ENCODE measurements at regions of chr4 and their contacts with region 1.

Region 1: DNA sequence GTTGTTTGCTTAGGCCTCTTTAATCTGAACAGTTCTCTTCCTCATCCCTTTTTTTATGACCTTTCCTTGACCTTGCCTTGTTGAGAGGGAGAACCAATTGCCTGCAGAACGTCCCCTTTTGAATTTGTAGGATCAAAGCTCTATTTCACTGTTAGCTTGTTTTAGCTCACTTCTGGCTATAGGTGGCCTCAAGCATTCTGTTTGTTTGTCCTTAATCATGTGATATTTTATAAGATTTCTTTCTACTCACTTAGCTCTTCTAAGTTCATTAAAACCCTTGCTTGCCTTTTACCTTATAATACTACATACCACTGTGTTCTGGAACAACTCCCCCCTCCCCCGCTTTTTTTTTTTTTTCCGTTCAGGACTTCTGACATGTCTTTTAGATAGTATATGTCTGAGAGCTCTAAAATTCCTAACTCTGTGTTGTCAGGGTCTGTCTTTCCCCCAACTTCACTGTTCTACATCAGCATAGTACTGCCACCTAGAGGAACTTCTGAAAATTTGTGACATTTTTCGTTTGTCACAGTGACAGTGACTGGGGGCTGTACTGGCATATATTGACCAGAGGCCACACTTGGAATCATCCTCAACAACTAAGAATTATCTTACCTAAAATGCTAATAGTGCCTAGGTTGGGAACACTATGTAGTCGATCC is 128.5 kb downstream of the LARP7 start:
- DNase-seq: peak; percentile 7
- ATAC-seq: peak; percentile 91
- H3K4me3 ChIP-seq: no peak overlapping the region
- H3K27ac ChIP-seq: no peak overlapping the region
- H3K4me1 ChIP-seq: no peaks in the 10 kb centered on the region; the same call in 1 of the 2 replicates
- H3K27me3 ChIP-seq: no peaks in the 10 kb centered on the region
- CTCF ChIP-seq: peak; percentile 49 to 58 (median 56); a peak in 5 of 6 replicates
- EP300 ChIP-seq: no peak
- POLR2A ChIP-seq: no peak
- RAD21 ChIP-seq: peak; percentile 67

Region 2: GRCh38 chr4:112327965-112328733 is 437.3 kb before region 1 on chr4:
- CTCF ChIA-PET with region 1: interaction called, 22 read pairs
- POLR2A ChIA-PET with region 1: no interaction called
- RAD21 ChIA-PET with region 1: interaction called, 3 read pairs
- SMC1A ChIA-PET with region 1: interaction called, 9 read pairs
- in situ Hi-C with region 1: loop called (anchors 5 kb)
- intact Hi-C with region 1: loop called (anchors 2 kb)
- DNase-seq: peak; percentile 73
- ATAC-seq: peak; percentile 92
- H3K4me3 ChIP-seq: no peak overlapping the region
- H3K27ac ChIP-seq: no peak overlapping the region
- H3K4me1 ChIP-seq: peaks cover 4% of the 10 kb centered on the region
- H3K27me3 ChIP-seq: no peaks in the 10 kb centered on the region
- CTCF ChIP-seq: peak; percentile 51 to 78 (median 52); a peak in 5 of 6 replicates
- EP300 ChIP-seq: 0 out of 4 replicates have a peak, but pooled peaks of 1 of the 2 experiments have one; percentile 17
- POLR2A ChIP-seq: no peak
- RAD21 ChIP-seq: peak; percentile 90

Region 3: DNA sequence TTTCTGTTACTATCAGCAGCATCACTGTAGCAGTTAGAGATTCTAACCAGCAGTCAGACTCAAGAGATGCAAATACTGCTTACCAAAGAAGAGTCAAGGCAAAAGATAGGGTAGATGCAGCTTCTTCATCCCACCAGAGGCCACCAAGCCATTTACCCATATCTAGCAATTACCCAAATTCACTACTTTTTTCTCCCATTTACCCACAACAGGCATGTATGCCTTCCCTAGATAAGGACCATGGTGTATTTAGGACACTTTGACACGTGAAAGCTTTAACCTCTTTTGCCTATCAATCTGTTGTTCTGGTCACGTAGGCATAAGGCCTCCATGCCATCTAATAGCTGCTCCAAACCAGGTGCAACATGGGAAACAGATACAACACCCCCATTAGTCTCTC is 122.9 kb before region 1 on chr4:
- CTCF ChIA-PET with region 1: interaction called, 205 read pairs
- POLR2A ChIA-PET with region 1: no interaction called
- RAD21 ChIA-PET with region 1: interaction called, 8 read pairs
- SMC1A ChIA-PET with region 1: interaction called, 46 read pairs
- in situ Hi-C with region 1: loop called (anchors 5 kb)
- intact Hi-C with region 1: loop called (anchors 1 kb)
- DNase-seq: no peak
- ATAC-seq: peak; percentile 17
- H3K4me3 ChIP-seq: no peak overlapping the region
- H3K27ac ChIP-seq: no peak overlapping the region
- H3K4me1 ChIP-seq: peaks cover 13% of the 10 kb centered on the region
- H3K27me3 ChIP-seq: no peaks in the 10 kb centered on the region
- CTCF ChIP-seq: no peak
- EP300 ChIP-seq: no peak
- POLR2A ChIP-seq: no peak
- RAD21 ChIP-seq: no peak

Region 4: DNA sequence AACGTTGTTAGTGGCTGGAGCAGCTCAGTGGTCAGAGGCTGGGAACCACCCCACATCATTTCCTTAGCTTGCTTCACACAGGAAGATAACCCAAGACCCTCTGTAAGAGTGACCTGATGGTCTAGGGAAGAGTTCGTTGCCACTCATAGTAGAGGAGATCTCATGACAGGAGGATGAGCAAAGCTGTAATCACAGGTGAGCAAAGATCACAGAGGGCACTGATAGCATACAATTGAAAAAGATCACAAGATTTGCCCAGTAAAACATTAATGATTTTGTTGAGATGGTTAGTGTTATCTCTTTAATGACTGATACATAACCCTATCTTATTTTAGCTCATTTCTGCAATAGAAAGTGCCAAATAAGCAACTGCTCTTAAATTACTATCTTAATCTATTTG is 84.5 kb before region 1 on chr4:
- CTCF ChIA-PET with region 1: interaction called, 13 read pairs
- POLR2A ChIA-PET with region 1: no interaction called
- RAD21 ChIA-PET with region 1: no interaction called
- SMC1A ChIA-PET with region 1: interaction called, 3 read pairs
- in situ Hi-C with region 1: no loop called
- intact Hi-C with region 1: no loop called
- DNase-seq: no peak
- ATAC-seq: no peak
- H3K4me3 ChIP-seq: no peak overlapping the region
- H3K27ac ChIP-seq: no peak overlapping the region
- H3K4me1 ChIP-seq: no peaks in the 10 kb centered on the region
- H3K27me3 ChIP-seq: no peaks in the 10 kb centered on the region
- CTCF ChIP-seq: no peak
- EP300 ChIP-seq: no peak
- POLR2A ChIP-seq: no peak
- RAD21 ChIP-seq: no peak

Region 5: DNA sequence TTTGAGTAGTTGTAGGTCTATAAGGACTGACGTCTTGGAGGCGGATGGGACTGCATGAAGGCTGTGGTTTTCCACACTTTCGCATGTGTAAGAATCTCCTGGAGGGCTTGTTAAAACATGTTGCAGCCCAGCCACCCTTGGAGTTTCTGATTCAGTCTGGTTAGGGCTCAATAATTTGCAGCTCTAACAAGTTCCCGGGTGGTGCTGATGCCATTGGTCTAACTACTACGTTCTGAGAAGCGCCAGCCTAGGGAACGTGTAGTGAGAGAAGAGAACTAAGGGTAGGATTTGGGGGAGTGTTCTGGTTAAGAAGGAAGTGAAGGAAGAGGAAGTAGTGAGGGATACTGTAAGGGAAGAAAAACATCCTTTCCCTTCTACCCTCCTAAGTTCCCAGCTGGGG is 10.4 kb after region 1 on chr4:
- CTCF ChIA-PET with region 1: interaction called, 22 read pairs
- POLR2A ChIA-PET with region 1: no interaction called
- RAD21 ChIA-PET with region 1: interaction called, 3 read pairs
- SMC1A ChIA-PET with region 1: interaction called, 6 read pairs
- in situ Hi-C with region 1: no loop called
- intact Hi-C with region 1: no loop called
- DNase-seq: no peak
- ATAC-seq: no peak
- H3K4me3 ChIP-seq: no peak overlapping the region
- H3K27ac ChIP-seq: no peak overlapping the region
- H3K4me1 ChIP-seq: no peaks in the 10 kb centered on the region
- H3K27me3 ChIP-seq: no peaks in the 10 kb centered on the region
- CTCF ChIP-seq: no peak
- EP300 ChIP-seq: no peak
- POLR2A ChIP-seq: no peak
- RAD21 ChIP-seq: no peak

Region 6: GRCh38 chr4:112938461-112939058 is 173.1 kb after region 1 on chr4:
- CTCF ChIA-PET with region 1: interaction called, 320 read pairs
- POLR2A ChIA-PET with region 1: interaction called, 5 read pairs
- RAD21 ChIA-PET with region 1: interaction called, 60 read pairs
- SMC1A ChIA-PET with region 1: interaction called, 98 read pairs
- in situ Hi-C with region 1: loop called (anchors 5 kb)
- intact Hi-C with region 1: loop called (anchors 1 kb)
- DNase-seq: no peak
- ATAC-seq: peak; percentile 72
- H3K4me3 ChIP-seq: no peak overlapping the region
- H3K27ac ChIP-seq: no peak overlapping the region
- H3K4me1 ChIP-seq: no peaks in the 10 kb centered on the region
- H3K27me3 ChIP-seq: no peaks in the 10 kb centered on the region
- CTCF ChIP-seq: peak; percentile 63 to 71 (median 67)
- EP300 ChIP-seq: no peak
- POLR2A ChIP-seq: no peak
- RAD21 ChIP-seq: peak; percentile 92

Region 7: DNA sequence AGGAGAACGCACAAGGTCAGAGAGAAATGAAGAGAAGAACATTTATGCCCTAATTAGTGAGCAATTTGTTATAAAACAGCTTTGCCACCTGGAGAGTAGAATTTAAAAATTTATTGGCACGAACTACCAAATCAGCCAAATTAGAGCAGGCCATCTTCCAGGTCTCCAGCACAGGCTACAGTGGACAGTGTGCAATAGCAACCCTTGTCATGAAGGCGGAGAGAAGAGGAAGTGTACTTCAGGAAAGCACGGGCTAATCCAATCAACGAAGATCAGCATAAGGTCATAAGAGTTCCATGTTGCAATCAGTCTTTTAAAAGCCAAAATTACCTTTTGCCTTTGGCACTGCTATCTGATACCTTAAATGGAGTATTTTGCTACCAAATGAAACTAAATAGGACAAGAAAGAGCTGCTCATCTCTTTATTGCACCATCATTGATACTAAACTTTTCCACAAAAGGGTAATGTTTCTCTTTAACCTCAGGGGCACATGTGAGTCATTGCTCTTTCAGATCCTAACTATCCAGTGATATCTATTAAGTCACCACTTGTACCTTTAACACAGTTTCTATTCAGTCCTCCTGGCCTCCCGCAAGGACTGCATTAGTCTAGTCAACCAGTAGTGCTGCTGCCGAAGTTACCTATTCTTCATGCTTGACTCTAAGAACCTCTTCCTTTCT is 303.9 kb after region 1 on chr4:
- CTCF ChIA-PET with region 1: no interaction called
- POLR2A ChIA-PET with region 1: no interaction called
- RAD21 ChIA-PET with region 1: no interaction called
- SMC1A ChIA-PET with region 1: no interaction called
- in situ Hi-C with region 1: no loop called
- intact Hi-C with region 1: no loop called
- DNase-seq: no peak
- ATAC-seq: no peak
- H3K4me3 ChIP-seq: no peak overlapping the region
- H3K27ac ChIP-seq: no peak overlapping the region
- H3K4me1 ChIP-seq: no peaks in the 10 kb centered on the region
- H3K27me3 ChIP-seq: no peaks in the 10 kb centered on the region
- CTCF ChIP-seq: no peak
- EP300 ChIP-seq: no peak
- POLR2A ChIP-seq: no peak
- RAD21 ChIP-seq: no peak

Measured in GM12878 (cell line).